Gastrocnemius medialis (tissue), 4 donors: ENCODE measurements at regions of chr11 and their contacts with region 1.

Region 1: GRCh38 chr11:94973099-94973968 is at the starts of genes CWC15 and KDM4D:
- DNase-seq: peak; percentile 92 to 93
- ATAC-seq: peak; percentile 100
- H3K4me3 ChIP-seq: peak within 1 kb of the TSS; percentile 82 to 97 (median 90)
- H3K27ac ChIP-seq: peak within 1 kb of the TSS; percentile 78 to 88 (median 80)
- H3K4me1 ChIP-seq: peaks cover 14 to 17% of the 10 kb centered on the region in 2 donors
- H3K27me3 ChIP-seq: no peaks in the 10 kb centered on the region
- CTCF ChIP-seq: no peak
- POLR2A ChIP-seq: peak; percentile 40 to 56
- total RNA-seq, gene CWC15: 53.9 to 69.5 (median 60.5) TPM
- total RNA-seq, gene KDM4D: 0.12 to 1.5 (median 0.56) TPM

Region 2: GRCh38 chr11:93784152-93784934 is 1189.0 kb before region 1 on chr11 and contains the start of gene MED17:
- in situ Hi-C with region 1: no loop called
- intact Hi-C with region 1: loop called (anchors 1 kb)
- DNase-seq: peak; percentile 88
- ATAC-seq: peak; percentile 99
- H3K4me3 ChIP-seq: peak within 1 kb of the TSS; percentile 73 to 98 (median 91)
- H3K27ac ChIP-seq: peak within 1 kb of the TSS; percentile 91 to 94 (median 94)
- H3K4me1 ChIP-seq: peaks cover 27 to 35% of the 10 kb centered on the region in 2 donors
- H3K27me3 ChIP-seq: no peaks in the 10 kb centered on the region
- CTCF ChIP-seq: peak in 4 of 5 experiments; percentile 38 to 53 (median 44)
- POLR2A ChIP-seq: peak; percentile 79
- total RNA-seq, gene MED17: 12.3 to 14.0 (median 13.4) TPM

Region 3: DNA sequence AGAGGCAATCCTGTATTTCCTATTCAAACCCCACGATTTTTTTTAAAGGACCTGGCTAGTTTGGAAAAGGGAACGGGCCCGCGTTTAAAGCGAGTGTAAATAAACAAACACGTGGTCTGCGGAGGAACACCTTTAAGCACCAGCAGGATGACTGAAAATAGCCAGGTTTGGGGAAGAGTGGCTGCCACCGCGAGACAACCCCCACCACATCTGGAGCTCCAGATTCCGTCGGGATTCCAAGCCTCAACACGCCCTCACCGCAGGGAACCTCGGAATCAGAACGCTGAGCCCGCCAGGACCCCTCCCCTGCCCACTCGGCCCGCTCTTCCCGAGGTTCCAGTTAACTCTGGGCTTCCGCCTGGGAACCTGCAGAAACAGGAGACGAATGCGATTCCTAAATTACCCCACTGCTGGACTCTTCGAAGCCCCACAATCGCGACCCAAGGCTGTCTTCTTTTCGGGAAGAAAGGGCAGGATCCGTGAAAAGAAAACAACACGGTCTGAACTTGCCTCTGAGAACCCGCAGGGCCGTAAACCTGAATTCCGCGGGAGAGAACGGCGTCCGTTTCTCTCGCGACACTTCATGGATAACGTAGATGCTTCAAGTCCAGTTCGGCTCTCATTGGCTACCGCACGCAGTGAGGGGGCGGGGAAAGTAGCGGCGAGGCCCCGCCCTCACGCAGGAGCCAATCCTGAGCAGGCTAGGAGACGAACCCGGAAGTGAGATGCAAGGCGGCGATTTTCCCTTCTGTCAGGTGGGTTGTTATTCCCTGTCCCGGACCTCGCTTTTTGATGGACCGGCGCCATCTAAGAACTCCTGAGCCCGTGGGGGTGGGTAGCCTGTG is 479.8 kb before region 1 on chr11 and contains the starts of genes ANKRD49 and MRE11:
- in situ Hi-C with region 1: no loop called
- intact Hi-C with region 1: loop called (anchors 5 kb)
- DNase-seq: peak; percentile 96 to 98
- ATAC-seq: peak; percentile 100
- H3K4me3 ChIP-seq: peak within 1 kb of the TSS; percentile 80 to 94 (median 86)
- H3K27ac ChIP-seq: peak within 1 kb of the TSS; percentile 76 to 87 (median 82)
- H3K4me1 ChIP-seq: peaks cover 24 to 27% of the 10 kb centered on the region in 2 donors
- H3K27me3 ChIP-seq: no peaks in the 10 kb centered on the region
- CTCF ChIP-seq: no peak
- POLR2A ChIP-seq: peak; percentile 53 to 74
- total RNA-seq, gene ANKRD49: 9.0 to 21.1 (median 11.9) TPM
- total RNA-seq, gene MRE11: 5.3 to 12.3 (median 5.9) TPM

Region 4: DNA sequence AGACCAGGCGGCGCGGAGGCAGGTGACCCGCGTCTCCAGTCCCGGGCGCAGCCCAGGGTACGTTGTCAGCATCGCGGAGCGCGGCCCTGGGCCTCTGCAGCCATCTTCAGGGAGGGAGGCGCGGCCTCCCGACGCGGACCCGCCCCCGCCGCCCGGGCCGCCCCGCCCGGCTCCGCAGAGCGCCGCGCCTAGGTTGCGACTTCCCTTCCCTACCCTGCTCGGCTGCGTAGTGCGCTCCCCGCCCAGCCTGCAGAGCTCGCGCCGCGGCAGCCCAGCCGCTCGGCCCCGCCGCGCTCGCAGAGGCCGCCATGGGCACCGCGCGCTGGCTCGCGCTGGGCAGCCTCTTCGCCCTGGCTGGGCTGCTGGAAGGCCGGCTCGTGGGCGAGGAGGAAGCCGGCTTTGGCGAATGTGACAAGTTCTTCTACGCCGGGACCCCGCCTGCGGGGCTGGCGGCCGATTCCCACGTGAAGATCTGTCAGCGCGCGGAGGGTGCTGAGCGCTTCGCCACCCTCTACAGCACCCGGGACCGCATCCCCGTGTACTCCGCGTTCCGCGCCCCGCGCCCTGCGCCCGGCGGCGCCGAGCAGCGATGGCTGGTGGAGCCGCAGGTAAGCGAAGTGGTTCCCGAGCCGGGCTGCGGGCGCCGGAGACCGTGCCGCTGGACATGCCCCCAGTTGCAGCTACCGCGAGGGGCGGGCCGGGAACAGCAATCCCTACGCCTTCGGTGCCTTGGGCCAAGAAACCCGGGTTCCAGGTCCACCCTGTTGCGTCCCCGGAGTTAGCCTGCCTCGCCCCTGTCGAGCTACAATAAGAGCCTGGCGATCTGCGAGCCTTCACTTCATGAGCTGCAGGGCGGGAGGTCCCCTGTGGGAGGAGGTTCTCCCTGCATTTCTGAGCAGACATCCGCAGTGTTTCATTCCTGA is 116.5 kb after region 1 on chr11 and contains the start of gene ENDOD1:
- in situ Hi-C with region 1: no loop called
- intact Hi-C with region 1: no loop called
- DNase-seq: peak; percentile 59 to 72
- ATAC-seq: peak; percentile 86 to 87
- H3K4me3 ChIP-seq: peak within 1 kb of the TSS; percentile 69 to 97 (median 74)
- H3K27ac ChIP-seq: peak within 1 kb of the TSS; percentile 84 to 97 (median 89)
- H3K4me1 ChIP-seq: peaks cover 38 to 42% of the 10 kb centered on the region in 2 donors
- H3K27me3 ChIP-seq: no peaks in the 10 kb centered on the region
- CTCF ChIP-seq: peak in 4 of 5 experiments; percentile 11 to 26 (median 16)
- POLR2A ChIP-seq: peak; percentile 84 to 88
- total RNA-seq, gene ENDOD1: 17.5 to 35.2 (median 27.6) TPM

Region 5: DNA sequence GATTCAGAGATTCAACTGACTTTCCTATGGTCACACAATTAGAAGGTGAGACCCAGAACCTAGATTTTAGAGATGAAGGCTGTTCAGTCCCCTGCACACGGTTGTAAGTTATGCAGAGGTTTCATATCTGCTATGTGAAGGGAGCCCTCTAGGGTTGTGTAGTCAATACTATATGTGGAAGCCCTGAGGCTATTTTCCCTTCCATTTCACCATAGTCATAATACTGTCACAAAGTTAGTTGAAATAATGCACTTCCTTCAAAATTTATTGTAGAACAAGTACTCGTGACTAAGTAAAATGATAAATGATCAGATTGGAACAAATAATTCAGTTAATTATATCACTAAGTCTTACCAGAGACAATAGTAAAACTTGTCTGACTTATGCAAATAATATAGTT is 165.1 kb after region 1 on chr11:
- in situ Hi-C with region 1: loop called in 1 of 4 experiments (anchors 10 kb)
- intact Hi-C with region 1: no loop called
- DNase-seq: no peak
- ATAC-seq: peak; percentile 77 to 92
- H3K4me3 ChIP-seq: no peak overlapping the region
- H3K27ac ChIP-seq: no peak overlapping the region
- H3K4me1 ChIP-seq: peaks cover 7% of the 10 kb centered on the region in 2 donors
- H3K27me3 ChIP-seq: no peaks in the 10 kb centered on the region
- CTCF ChIP-seq: peak; percentile 17 to 49 (median 20)
- POLR2A ChIP-seq: no peak